Activated CD8-positive, alpha-beta T cell treated with anti-CD3 and anti-CD28 coated beads, Interleukin-2, amount 10 ng/mL, durations not matched to agents 7 days and 5 days (primary cell): ENCODE measurements at regions of chr9 and their contacts with region 1.

Region 1: DNA sequence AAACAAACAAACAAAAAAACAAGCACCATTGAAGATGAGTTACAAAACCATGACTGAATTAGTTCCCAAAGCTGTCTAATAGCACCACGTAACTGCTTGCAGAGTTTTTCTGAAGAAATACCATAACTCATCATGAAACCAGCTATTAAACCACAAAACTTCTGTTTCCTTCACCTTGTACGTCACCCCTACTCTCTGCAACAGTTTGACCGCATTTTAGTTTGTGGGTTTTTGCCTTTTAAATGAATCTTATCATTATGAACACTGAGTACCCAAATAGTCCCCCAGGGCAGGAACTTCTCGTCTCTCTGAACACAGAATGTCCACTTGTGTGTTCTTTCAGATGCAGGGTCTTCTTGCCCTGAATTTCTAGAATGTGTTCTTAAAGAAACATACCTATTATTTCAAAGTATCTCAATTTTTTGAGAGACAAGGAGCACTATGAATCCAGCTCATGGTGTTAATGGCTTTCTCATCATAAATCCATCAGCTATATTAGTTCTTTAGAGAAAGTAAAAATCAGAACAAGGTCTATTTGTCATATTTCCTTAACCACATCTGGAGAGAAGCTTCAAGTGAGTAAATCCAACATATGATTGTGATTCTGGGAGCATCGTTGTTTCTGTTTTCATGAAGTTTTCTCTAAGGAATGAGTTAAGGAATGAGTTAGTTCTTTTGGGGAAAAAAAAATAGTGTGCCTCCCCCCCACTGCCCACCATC is 210.6 kb downstream of the AUH start:
- DNase-seq: peak; percentile 76
- ATAC-seq: peak; percentile 86
- H3K4me3 Mint-ChIP-seq: peak overlapping the region; percentile 53
- H3K27ac Mint-ChIP-seq: peak overlapping the region; percentile 95
- H3K4me1 Mint-ChIP-seq: peaks cover 93% of the 10 kb centered on the region
- H3K27me3 Mint-ChIP-seq: no peaks in the 10 kb centered on the region

Region 2: GRCh38 chr9:91077627-91078441 is 73.3 kb before region 1 on chr9:
- CTCF ChIA-PET with region 1: no interaction called
- POLR2A ChIA-PET with region 1: no interaction called
- DNase-seq: no peak
- ATAC-seq: no peak
- H3K4me3 Mint-ChIP-seq: no peak overlapping the region
- H3K27ac Mint-ChIP-seq: no peak overlapping the region
- H3K4me1 Mint-ChIP-seq: peaks cover 8% of the 10 kb centered on the region
- H3K27me3 Mint-ChIP-seq: no peaks in the 10 kb centered on the region

Region 3: GRCh38 chr9:91089405-91090129 is 61.6 kb before region 1 on chr9:
- CTCF ChIA-PET with region 1: interaction called, 13 read pairs
- POLR2A ChIA-PET with region 1: interaction called, 4 read pairs
- DNase-seq: peak; percentile 54
- ATAC-seq: no peak
- H3K4me3 Mint-ChIP-seq: no peak overlapping the region
- H3K27ac Mint-ChIP-seq: peak overlapping the region; percentile 48
- H3K4me1 Mint-ChIP-seq: peaks cover 38% of the 10 kb centered on the region
- H3K27me3 Mint-ChIP-seq: no peaks in the 10 kb centered on the region

Region 4: GRCh38 chr9:91131433-91131839 is 19.7 kb before region 1 on chr9:
- CTCF ChIA-PET with region 1: interaction called, 23 read pairs
- POLR2A ChIA-PET with region 1: interaction called, 28 read pairs
- DNase-seq: peak; percentile 89
- ATAC-seq: peak; percentile 100
- H3K4me3 Mint-ChIP-seq: peak overlapping the region; percentile 26
- H3K27ac Mint-ChIP-seq: peak overlapping the region; percentile 88
- H3K4me1 Mint-ChIP-seq: peaks cover 44% of the 10 kb centered on the region
- H3K27me3 Mint-ChIP-seq: no peaks in the 10 kb centered on the region

Region 5: DNA sequence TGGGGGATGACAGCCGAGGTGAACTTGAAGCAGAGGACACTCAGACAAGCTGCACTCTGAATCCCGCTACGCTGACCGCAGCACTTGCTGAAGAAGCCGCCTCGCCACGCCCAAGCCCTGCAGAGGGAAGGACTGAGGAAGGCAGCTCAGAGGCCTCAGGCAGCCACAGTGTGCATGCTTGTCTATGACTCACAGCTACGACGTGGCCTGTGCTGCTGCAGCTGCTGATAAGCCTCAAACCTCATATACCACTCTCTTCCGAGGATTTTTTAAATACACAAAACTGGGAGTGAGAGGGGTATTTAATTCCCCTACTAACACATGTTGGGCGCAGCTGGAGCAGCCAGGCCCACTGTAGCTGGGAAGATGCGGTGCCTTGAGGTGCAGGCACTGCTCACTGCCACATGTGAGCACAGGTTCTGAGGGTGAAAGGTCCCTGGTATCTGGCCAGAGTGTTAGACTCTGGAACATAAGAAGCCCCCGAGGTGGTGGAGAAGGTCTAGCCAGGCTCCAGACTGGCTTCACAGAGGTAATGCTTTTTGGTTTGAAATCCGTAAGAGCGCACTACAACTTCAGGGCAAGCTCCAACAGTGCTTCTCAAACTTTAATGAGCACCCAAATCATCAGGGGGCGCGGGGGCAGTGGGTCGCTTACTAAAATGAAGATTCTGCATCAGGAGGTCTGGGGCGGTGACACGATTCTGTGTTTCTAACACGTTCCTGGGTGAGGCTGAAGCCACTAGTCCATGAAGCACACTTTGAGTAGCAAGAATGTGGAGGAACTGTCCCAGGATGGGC is 13.8 kb after region 1 on chr9:
- CTCF ChIA-PET with region 1: interaction called, 47 read pairs
- POLR2A ChIA-PET with region 1: interaction called, 52 read pairs
- DNase-seq: peak; percentile 91
- ATAC-seq: peak; percentile 86
- H3K4me3 Mint-ChIP-seq: peak overlapping the region; percentile 80
- H3K27ac Mint-ChIP-seq: peak overlapping the region; percentile 96
- H3K4me1 Mint-ChIP-seq: peaks cover 67% of the 10 kb centered on the region
- H3K27me3 Mint-ChIP-seq: no peaks in the 10 kb centered on the region

Region 6: GRCh38 chr9:91193658-91194391 is 42.7 kb after region 1 on chr9:
- CTCF ChIA-PET with region 1: interaction called, 15 read pairs
- POLR2A ChIA-PET with region 1: interaction called, 22 read pairs
- DNase-seq: peak; percentile 93
- ATAC-seq: peak; percentile 79
- H3K4me3 Mint-ChIP-seq: peak overlapping the region; percentile 70
- H3K27ac Mint-ChIP-seq: peak overlapping the region; percentile 95
- H3K4me1 Mint-ChIP-seq: peaks cover 85% of the 10 kb centered on the region
- H3K27me3 Mint-ChIP-seq: no peaks in the 10 kb centered on the region

Region 7: DNA sequence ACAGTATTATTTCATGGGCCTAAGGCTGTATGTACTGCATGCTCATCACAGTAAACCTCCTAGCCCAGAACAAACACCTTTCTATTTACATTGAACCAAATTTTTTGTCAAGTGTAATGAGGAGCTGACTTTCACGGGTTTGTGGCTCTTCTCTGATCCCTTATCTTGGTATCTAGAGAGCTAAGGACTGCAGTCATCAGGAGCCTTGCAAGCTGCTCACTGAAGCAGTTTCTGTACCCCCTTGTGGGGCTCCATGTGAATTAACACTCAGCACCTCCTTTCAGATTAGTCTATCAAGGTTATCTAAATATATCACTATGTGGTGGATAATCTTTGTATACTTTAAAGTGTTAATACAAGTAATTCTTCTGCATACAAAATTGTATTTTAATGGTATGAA is 102.3 kb after region 1 on chr9:
- CTCF ChIA-PET with region 1: interaction called, 16 read pairs
- POLR2A ChIA-PET with region 1: interaction called, 3 read pairs
- DNase-seq: peak; percentile 74
- ATAC-seq: peak; percentile 99
- H3K4me3 Mint-ChIP-seq: no peak overlapping the region
- H3K27ac Mint-ChIP-seq: no peak overlapping the region
- H3K4me1 Mint-ChIP-seq: peaks cover 48% of the 10 kb centered on the region
- H3K27me3 Mint-ChIP-seq: no peaks in the 10 kb centered on the region